ENCODE measurements at regions of chr1 and their contacts with region 1.

Region 1: GRCh38 chr1:168603501-168604110 is 27.2 kb downstream of the XCL1 start:
- DNase-seq: peak; percentile 66
- H3K4me3 ChIP-seq: no peak overlapping the region
- H3K27ac ChIP-seq: peak overlapping the region in 1 of 2 experiments; percentile 55; a peak in 2 of 4 replicates
- H3K4me1 ChIP-seq: peaks cover 4 to 5% of the 10 kb centered on the region in 2 experiments; a peak in 3 of 4 replicates
- H3K27me3 ChIP-seq: no peaks in the 10 kb centered on the region
- CTCF ChIP-seq: peak; percentile 90
- EP300 ChIP-seq: 0 out of 4 replicates have a peak, but pooled peaks of 1 of the 2 experiments have one; percentile 11
- RAD21 ChIP-seq: peak; percentile 99

Region 2: DNA sequence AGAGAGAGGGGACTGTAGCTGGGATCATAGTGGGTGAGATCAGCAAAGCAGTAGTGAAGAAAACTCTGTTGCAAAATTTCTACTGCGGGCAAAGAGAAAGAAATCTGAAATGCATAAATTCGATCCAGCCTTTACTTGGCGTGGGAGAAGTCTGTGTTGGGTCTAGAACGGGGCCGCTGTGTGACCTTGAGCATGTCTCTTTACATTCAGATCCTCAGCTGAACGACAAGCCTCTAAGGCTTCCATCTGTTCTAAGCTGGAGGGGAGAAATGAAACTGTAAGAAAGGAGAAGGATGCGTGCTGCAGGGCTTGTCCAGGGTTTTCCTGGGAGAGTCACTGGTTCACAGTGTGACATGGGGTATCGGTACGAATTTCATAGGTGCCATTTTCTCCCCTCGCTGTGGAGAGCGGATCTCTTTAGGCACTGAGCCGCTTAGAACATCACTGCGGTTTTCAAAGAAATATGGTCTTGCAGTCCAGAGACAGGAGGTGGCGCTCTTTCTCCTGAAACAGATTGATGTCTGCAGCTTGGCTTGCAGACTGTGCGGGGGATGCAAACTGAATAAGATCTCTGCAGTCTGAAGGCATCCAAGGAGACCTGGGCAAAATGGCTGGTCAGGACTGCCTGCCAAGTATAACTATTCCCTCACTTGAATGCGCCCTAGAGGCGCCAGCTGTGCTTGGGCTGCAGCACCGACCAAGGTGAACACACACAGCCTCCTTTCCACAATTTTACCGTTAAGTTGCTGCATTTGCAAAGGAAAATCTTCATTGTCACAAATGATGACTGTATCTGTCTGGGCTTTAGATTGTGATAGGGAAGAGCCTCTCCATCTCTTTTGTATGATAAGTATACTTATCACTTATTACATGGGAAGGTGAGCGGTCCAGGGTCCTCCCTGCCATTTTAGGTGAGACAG is 163.9 kb before region 1 on chr1:
- CTCF ChIA-PET with region 1: interaction called, 12 read pairs
- POLR2A ChIA-PET with region 1: no interaction called
- DNase-seq: peak; percentile 72
- H3K4me3 ChIP-seq: peak overlapping the region; percentile 34 to 38
- H3K27ac ChIP-seq: peak overlapping the region in 1 of 2 experiments; percentile 86; a peak in 3 of 4 replicates
- H3K4me1 ChIP-seq: peaks cover 0 to 11% of the 10 kb centered on the region in 2 experiments; a peak in 2 of 4 replicates
- H3K27me3 ChIP-seq: no peaks in the 10 kb centered on the region
- CTCF ChIP-seq: peak; percentile 90
- EP300 ChIP-seq: peak; percentile 15 to 21; a peak in 2 of 4 replicates
- RAD21 ChIP-seq: peak; percentile 99

Region 3: GRCh38 chr1:168613691-168614231 is 10.2 kb after region 1 on chr1:
- CTCF ChIA-PET with region 1: interaction called, 34 read pairs
- POLR2A ChIA-PET with region 1: no interaction called
- DNase-seq: peak; percentile 55
- H3K4me3 ChIP-seq: no peak overlapping the region
- H3K27ac ChIP-seq: peak overlapping the region; percentile 68 to 95; a peak in 3 of 4 replicates
- H3K4me1 ChIP-seq: peaks cover 12 to 40% of the 10 kb centered on the region in 2 experiments
- H3K27me3 ChIP-seq: no peaks in the 10 kb centered on the region
- CTCF ChIP-seq: no peak
- EP300 ChIP-seq: peak; percentile 66 to 81; a peak in 3 of 4 replicates
- RAD21 ChIP-seq: peak; percentile 18

Region 4: DNA sequence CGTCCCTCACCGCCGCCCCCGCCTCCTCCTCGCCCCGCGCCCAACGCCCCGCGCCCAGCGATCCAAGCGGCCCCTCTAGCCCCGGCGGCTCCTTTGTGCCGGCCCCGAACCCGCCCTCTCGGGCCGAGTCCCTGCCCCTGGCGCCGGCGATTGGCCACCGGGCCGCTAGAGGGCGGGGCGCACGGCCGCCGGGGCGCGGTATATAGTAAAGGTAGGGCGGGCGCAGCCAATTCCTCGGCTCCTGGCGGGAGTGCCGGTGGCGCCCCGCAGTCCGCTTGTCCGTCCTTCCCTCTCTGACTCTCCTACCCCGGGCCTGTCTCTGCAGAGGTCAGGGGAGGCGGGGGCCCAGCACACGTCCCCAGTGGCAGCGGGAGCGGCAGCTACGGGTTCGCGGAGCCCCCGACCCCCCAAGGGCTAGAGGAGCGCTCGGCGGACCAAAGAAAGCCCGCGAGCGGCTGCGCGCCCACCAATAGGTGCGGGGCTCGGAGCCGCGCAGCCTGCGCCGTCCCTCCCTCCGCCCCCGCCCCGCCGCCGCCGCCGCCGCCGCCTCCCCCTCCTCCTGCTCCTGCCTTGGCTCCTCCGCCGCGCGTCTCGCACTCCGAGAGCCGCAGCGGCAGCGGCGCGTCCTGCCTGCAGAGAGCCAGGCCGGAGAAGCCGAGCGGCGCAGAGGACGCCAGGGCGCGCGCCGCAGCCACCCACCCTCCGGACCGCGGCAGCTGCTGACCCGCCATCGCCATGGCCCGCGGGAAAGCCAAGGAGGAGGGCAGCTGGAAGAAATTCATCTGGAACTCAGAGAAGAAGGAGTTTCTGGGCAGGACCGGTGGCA is 502.7 kb after region 1 on chr1 and contains the start of gene ATP1B1:
- CTCF ChIA-PET with region 1: interaction called, 92 read pairs
- POLR2A ChIA-PET with region 1: interaction called, 5 read pairs
- DNase-seq: peak; percentile 96
- H3K4me3 ChIP-seq: peak within 1 kb of the TSS; percentile 84 to 85
- H3K27ac ChIP-seq: peak within 1 kb of the TSS; percentile 95 to 97
- H3K4me1 ChIP-seq: peaks cover 28 to 64% of the 10 kb centered on the region in 2 experiments
- H3K27me3 ChIP-seq: no peaks in the 10 kb centered on the region
- CTCF ChIP-seq: peak; percentile 13; the same call in 1 of the 2 replicates
- EP300 ChIP-seq: no peak
- RAD21 ChIP-seq: no peak
- polyA plus RNA-seq, gene ATP1B1: 49.5 and 52.7 TPM in 2 replicates

Region 5: GRCh38 chr1:169367486-169368405 is 764.1 kb after region 1 on chr1 and contains the starts of genes BLZF1 and NME7:
- CTCF ChIA-PET with region 1: interaction called, 10 read pairs
- POLR2A ChIA-PET with region 1: no interaction called
- DNase-seq: peak; percentile 84
- H3K4me3 ChIP-seq: peak within 1 kb of the TSS; percentile 84 to 96
- H3K27ac ChIP-seq: peak within 1 kb of the TSS; percentile 90 to 98
- H3K4me1 ChIP-seq: peaks cover 7 to 25% of the 10 kb centered on the region in 2 experiments; a peak in 3 of 4 replicates
- H3K27me3 ChIP-seq: no peaks in the 10 kb centered on the region
- CTCF ChIP-seq: no peak
- EP300 ChIP-seq: no peak
- RAD21 ChIP-seq: no peak
- polyA plus RNA-seq, gene BLZF1: 9.5 and 16.0 TPM in 2 replicates
- polyA plus RNA-seq, gene NME7: 13.7 and 20.6 TPM in 2 replicates